ENCODE measurements at regions of chrX and their contacts with region 1.

Region 1: DNA sequence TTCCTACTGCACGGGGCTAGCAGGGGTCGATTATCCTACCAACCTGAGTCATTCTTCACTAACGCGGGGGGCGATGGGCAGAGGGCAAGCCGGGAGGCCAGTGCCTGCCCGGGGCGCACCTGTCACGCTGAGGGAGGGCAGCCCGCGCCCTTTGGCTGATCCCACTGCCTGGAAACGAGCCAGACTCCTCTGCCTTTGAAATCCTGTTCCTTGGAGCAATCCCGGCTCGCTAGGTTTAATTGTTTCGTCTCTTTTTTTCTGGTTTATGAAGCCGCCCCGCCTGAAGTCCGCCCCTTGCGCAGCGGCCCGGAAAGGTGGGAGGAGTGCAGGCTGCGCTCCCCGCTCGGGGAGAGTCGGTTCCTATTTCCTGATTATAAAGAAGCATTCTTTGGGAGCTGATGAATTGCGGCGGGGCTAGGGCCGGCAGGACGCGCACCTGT is 484.3 kb downstream of the BCOR start:
- DNase-seq: peak; percentile 3
- H3K4me3 Mint-ChIP-seq: peak overlapping the region; percentile 87
- H3K27ac Mint-ChIP-seq: peak overlapping the region; percentile 95
- H3K4me1 Mint-ChIP-seq: peaks cover 42% of the 10 kb centered on the region
- H3K27me3 Mint-ChIP-seq: peaks cover 5% of the 10 kb centered on the region

Region 2: GRCh38 chrX:39196192-39197102 is 417.1 kb before region 1 on chrX:
- intact Hi-C with region 1: loop called (anchors 1 kb)
- DNase-seq: peak; percentile 44
- H3K4me3 Mint-ChIP-seq: peak overlapping the region; percentile 58
- H3K27ac Mint-ChIP-seq: peak overlapping the region; percentile 87
- H3K4me1 Mint-ChIP-seq: peaks cover 52% of the 10 kb centered on the region
- H3K27me3 Mint-ChIP-seq: no peaks in the 10 kb centered on the region

Region 3: DNA sequence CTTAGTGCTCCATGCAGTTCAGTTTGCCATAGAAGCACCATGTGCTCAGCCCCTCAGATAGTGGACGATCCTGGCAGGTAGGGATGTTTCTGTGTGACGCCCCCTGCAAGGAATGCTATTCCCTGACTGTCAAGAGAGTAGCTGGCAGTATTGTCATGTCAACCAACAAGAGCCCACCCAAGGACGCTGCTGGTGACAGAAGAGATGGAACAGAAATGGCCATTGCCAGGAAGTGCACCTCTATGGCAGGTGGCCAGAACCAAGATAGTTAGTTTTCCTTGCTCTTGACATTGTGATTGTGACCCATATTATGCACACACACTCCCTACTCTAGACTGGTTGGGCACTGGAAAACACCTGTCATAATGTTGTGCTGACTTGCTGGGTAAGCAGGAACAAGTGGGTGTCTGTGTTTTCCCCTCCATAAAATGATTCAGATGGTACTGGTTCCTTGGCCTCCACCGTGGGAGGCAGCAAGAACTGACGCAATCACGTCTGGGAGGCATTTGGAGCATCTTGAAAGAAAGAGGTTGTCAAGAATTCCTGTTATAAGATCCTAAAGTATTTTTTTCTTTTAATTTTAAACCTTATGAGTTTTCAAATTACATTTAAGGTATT is 304.4 kb before region 1 on chrX:
- intact Hi-C with region 1: loop called (anchors 1 kb)
- DNase-seq: peak; percentile 3
- H3K4me3 Mint-ChIP-seq: peak overlapping the region; percentile 58
- H3K27ac Mint-ChIP-seq: peak overlapping the region; percentile 100
- H3K4me1 Mint-ChIP-seq: peaks cover 67% of the 10 kb centered on the region
- H3K27me3 Mint-ChIP-seq: no peaks in the 10 kb centered on the region

Region 4: DNA sequence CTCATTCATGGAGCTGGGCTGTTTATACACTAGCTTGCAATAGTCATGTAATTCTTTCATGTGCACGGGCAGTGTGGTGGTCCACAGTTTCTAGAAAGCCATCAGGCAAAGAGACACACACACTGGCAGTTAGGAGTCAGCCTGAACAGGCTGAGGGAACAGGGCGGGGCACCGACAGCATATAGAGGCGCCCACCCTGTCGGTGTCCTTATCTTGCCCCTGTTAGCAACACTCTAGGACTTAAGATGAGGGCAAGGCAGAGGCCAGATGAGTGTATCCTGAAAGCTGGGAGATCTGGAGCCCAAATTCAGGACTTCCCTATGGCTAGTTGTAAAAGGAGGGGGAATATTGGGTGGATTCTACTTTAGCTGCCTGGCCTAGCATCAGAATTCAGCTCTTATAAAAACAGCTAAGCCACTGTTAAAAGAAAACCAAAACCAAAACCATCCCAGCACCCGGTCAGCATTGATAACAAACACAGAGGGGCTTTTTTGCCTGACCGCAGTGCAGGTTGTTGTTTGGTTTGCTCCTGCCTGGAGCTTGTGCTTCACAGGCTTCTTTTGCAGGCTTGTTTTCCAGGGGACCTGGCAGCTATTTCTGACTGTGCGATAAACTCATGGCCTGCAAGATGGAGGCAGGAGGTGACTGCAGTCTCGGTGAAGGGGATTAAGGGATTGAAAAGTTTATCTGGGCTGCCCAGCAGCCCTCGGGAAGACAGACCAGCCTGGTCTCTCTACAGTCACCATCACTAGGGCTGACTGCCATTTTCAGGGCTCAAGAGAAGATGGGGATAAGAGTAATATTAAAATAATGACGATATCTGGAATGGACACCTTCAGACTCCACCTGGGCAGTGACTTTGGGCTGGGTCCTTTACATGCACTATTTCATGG is 173.3 kb before region 1 on chrX:
- intact Hi-C with region 1: loop called (anchors 5 kb)
- DNase-seq: peak; percentile 8
- H3K4me3 Mint-ChIP-seq: no peak overlapping the region
- H3K27ac Mint-ChIP-seq: peak overlapping the region; percentile 91
- H3K4me1 Mint-ChIP-seq: peaks cover 44% of the 10 kb centered on the region
- H3K27me3 Mint-ChIP-seq: no peaks in the 10 kb centered on the region

Region 5: GRCh38 chrX:39633293-39633692 is 19.8 kb after region 1 on chrX:
- intact Hi-C with region 1: loop called (anchors 1 kb)
- DNase-seq: no peak
- H3K4me3 Mint-ChIP-seq: no peak overlapping the region
- H3K27ac Mint-ChIP-seq: no peak overlapping the region
- H3K4me1 Mint-ChIP-seq: peaks cover 23% of the 10 kb centered on the region
- H3K27me3 Mint-ChIP-seq: no peaks in the 10 kb centered on the region

Region 6: DNA sequence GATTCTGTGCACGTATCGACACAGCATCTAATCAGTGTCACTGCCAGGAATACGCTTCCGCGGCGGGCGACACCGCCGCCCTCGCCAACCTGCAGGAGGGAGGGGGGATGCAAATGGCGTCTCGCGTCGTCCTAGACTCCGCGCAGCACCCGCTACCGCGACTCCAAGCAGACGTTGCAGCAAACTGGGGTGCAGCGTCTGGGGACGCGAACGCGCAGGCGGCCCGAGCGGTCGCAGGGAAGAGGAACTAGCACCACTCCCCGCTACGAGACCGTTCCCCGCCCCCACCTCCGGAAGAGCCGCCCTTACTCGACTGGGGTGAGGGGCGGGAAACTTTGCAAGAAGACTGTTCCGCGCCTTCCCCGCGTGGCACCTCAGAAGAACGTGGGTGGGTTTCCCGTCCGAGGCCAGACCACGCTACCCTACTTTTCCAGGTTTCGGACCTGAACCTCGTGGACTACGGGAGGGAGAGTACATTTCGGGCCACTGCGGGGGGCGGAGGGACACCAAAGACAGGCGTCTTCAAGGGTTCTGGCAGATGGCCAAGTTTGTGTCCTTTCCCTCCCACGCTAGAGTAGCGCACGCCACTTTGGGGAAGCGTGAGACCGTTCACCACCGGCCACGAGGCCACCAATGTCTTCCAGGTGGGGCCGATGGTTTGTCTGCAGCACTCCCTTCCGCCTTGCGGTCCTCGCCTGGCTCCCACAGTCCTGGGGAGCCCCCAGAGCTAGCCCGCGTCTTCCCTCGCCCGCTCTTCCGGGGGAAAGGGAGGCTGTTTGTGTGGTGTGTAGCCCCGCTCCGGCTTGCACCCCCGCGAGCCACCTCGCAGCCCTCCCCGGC is 562.2 kb after region 1 on chrX:
- intact Hi-C with region 1: loop called (anchors 2 kb)
- DNase-seq: peak; percentile 61
- H3K4me3 Mint-ChIP-seq: peak overlapping the region; percentile 82
- H3K27ac Mint-ChIP-seq: peak overlapping the region; percentile 99
- H3K4me1 Mint-ChIP-seq: peaks cover 37% of the 10 kb centered on the region
- H3K27me3 Mint-ChIP-seq: no peaks in the 10 kb centered on the region

Measured in activated T-helper 1 cell treated with anti-CD3 and anti-CD28 coated beads, Interleukin-12 subunit alpha, Interleukin-12 subunit beta, Interleukin-2, Interleukin-4 antibody, amounts not matched to agents 30 ng/mL and 10 ng/mL and 1 ng/mL, durations not matched to agents 14 hours and 24 hours and 36 hours (primary cell).